Naive thymus-derived CD8-positive, alpha-beta T cell (primary cell): ENCODE measurements at regions of chr7 and their contacts with region 1.

Region 1: DNA sequence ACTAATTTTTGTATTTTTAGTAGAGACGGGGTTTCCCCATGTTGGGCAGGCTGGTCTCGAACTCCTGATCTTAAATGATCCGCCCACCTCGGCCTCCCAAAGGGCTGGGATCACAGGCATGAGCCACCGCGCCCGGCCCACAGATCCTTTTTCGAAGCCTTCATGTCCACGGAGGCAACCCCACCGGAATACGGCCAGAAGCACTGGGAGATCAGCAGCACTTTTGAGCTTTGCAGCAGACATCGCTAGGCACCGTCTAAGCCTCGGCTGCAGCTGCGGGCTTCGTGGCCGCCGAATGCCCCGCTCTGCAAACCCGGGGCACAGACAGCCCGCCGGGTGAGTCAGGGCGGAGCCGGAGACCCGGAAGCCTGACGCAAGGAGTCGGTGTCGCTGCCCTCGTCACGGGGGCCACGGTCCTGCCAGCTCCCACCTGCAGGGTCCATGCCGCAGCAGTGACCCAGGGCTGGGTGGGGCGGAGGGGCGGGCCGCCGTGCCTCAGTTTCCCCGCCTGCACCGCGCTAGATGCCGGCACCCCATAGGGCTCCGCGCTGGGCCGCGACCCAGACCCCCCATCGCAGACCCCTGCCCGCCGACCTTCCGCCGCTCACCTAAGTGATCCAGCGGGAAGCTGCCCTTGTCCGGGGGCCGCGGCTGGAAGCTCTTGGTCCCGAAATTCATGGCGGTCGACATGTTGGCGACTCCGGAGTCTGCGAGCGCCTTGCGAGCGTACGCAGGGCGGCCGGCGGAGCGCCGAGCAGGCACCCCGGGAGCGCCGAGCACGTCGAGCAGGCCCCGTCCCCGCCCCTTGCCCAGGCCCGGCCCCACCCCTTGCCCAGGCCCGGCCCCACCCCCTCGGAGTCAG is at the start of gene COX19:
- DNase-seq: peak; percentile 83 to 95 (median 90)
- ATAC-seq: peak; percentile 89 to 91
- H3K4me3 Mint-ChIP-seq: peak within 1 kb of the TSS; percentile 83 to 95 (median 90)
- H3K27ac Mint-ChIP-seq: peak within 1 kb of the TSS; percentile 74 to 94 (median 91)
- H3K4me1 Mint-ChIP-seq: peaks cover 10 to 39% (median 27%) of the 10 kb centered on the region in 4 donors
- H3K27me3 Mint-ChIP-seq: no peaks in the 10 kb centered on the region
- polyA plus RNA-seq, gene COX19: 19.3 to 21.5 (median 20.2) TPM

Region 2: DNA sequence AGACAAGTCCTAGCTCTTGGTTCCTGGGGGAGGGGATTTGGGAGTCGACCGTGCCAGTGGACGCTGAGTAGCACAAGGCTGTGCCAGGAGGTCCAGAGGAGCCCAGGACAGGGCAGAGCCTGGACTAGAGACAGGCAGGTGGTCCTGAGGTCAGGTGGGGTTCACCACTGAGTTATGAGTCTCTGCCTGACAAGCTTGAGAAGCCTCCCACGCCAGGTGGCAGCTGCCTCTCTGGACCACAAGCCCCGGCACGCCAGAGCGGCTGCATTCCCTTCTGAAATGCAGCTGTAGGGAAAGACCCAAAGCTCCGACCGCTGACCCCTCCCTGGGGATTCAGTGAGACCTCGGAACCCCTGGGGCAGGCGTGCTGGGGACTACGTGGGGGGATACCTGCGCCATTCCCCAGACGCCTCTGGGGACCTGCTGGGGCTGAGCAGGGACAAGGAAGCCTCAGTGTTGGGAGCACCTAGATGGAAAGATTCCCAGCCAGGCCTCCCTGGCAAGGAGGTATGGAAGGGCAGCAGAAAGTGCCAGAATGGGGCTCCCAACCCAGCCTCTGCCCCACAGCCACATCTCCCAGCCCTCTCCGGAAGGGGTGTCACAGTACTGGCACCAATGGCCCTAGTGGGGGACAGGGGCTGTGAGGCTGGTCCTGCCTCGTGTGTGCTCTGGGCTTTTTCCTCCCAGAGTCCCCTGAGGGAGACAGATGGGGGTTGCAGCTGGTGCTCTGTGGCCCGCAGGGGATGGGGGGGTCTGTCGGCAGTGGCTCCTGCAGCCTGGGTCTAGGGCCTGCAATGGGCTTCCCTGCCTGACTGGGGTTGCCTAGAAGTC is 484.4 kb before region 1 on chr7:
- POLR2A ChIA-PET with region 1: no interaction called
- DNase-seq: peak in 1 of 10 donors; percentile 55
- ATAC-seq: no peak
- H3K4me3 Mint-ChIP-seq: no peak overlapping the region
- H3K27ac Mint-ChIP-seq: peak overlapping the region in 1 of 10 donors; percentile 24
- H3K4me1 Mint-ChIP-seq: no peaks in the 10 kb centered on the region
- H3K27me3 Mint-ChIP-seq: peaks cover 0 to 10% (median 0%) of the 10 kb centered on the region in 5 donors

Region 3: GRCh38 chr7:923108-924041 is 51.7 kb before region 1 on chr7:
- POLR2A ChIA-PET with region 1: interaction called, 41 read pairs
- DNase-seq: peak; percentile 68 to 95 (median 89)
- ATAC-seq: peak; percentile 86 to 92
- H3K4me3 Mint-ChIP-seq: peak overlapping the region; percentile 82 to 93 (median 87)
- H3K27ac Mint-ChIP-seq: peak overlapping the region; percentile 92 to 97 (median 94)
- H3K4me1 Mint-ChIP-seq: peaks cover 11 to 57% (median 43%) of the 10 kb centered on the region in 4 donors
- H3K27me3 Mint-ChIP-seq: no peaks in the 10 kb centered on the region

Region 4: DNA sequence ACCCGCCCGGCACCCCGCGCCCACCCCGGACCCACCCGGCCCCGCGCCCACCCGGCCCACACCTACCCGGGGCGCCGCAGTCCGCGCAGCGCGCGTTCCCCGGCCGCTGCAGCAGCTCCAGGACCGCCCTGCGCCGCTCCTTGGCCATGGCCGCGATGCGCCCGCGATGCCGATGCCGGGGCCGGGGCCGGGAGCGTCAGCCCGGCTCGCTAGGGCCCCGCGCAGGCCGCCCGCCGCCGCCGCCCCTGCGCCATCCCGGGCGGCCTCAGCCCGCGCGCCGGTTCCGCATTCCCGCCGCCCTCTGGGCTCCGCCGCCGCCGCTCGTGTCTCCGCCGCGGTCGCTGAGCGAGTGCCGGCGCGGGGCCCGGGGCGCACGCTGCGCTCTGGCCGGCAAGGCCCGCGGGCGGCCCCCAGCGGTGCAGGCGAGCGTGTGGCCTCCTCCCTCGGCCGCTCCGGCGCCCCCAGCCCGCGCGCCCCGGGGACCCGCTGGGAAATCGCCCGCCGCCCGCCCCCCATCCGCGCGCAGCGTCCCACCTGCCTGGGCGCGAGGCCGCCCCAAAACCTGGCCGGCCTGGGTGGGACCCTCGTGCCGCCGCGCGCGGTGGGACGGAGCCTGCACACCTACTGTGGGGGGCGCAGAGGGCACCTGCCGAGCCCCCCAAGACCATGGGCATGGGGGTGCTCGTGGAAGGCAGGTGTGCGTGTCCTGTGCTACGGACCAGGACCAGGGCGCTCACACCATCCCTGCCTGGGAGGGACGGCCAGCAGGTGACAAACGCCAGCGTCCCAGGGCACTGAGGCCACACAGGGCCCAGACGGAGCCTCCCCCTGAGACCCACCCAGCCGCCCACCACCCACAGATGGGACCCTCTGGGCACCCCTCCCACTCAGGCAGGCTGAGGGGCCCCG is 20.5 kb before region 1 on chr7 and contains the start of gene ADAP1:
- POLR2A ChIA-PET with region 1: interaction called, 11 read pairs
- DNase-seq: peak; percentile 25 to 72 (median 50)
- ATAC-seq: peak; percentile 83 to 91
- H3K4me3 Mint-ChIP-seq: peak within 1 kb of the TSS; percentile 67 to 80 (median 75)
- H3K27ac Mint-ChIP-seq: peak within 1 kb of the TSS in 3 of 10 donors; percentile 57 to 74 (median 57)
- H3K4me1 Mint-ChIP-seq: peaks cover 0 to 14% (median 5%) of the 10 kb centered on the region in 4 donors
- H3K27me3 Mint-ChIP-seq: peaks cover 0 to 2% (median 0%) of the 10 kb centered on the region in 5 donors
- polyA plus RNA-seq, gene ADAP1: 7.6 to 18.4 (median 8.2) TPM

Region 5: GRCh38 chr7:992709-993607 is 17.9 kb after region 1 on chr7:
- POLR2A ChIA-PET with region 1: interaction called, 21 read pairs
- DNase-seq: peak; percentile 84 to 96 (median 90)
- ATAC-seq: peak; percentile 99
- H3K4me3 Mint-ChIP-seq: no peak overlapping the region
- H3K27ac Mint-ChIP-seq: no peak overlapping the region
- H3K4me1 Mint-ChIP-seq: peaks cover 3 to 8% (median 7%) of the 10 kb centered on the region in 4 donors
- H3K27me3 Mint-ChIP-seq: no peaks in the 10 kb centered on the region

Region 6: DNA sequence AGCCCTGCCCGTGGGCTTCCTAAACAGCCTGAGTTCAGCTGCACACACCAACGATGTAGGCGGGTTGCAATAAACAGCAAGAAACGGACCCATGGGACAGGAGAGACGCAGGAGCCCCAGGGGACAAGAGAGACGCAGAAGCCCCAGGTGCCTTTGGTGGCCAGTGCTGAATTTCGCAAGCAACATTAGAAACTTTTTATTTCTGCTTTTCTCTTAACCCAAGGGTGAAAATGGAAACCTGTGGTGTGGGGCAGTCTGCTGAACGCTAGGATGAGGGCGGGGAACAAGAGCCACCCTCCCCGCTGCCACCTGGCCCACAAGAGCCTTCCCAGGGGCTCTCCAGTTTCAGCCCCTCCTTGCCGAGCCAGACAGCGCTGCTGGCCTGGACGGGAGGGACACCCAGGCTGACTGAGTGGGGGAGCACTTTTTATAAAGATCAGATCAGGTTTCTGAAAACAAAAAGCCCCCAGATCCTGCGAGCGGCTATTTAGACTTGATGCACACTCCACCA is 49.3 kb after region 1 on chr7:
- POLR2A ChIA-PET with region 1: no interaction called
- DNase-seq: peak in 2 of 10 donors; percentile 26 to 71
- ATAC-seq: peak in 1 of 2 donors; percentile 4
- H3K4me3 Mint-ChIP-seq: peak overlapping the region in 2 of 10 donors; percentile 38 to 61
- H3K27ac Mint-ChIP-seq: peak overlapping the region in 6 of 10 donors; percentile 41 to 76 (median 55)
- H3K4me1 Mint-ChIP-seq: peaks cover 10 to 48% (median 32%) of the 10 kb centered on the region in 4 donors
- H3K27me3 Mint-ChIP-seq: no peaks in the 10 kb centered on the region

Region 7: GRCh38 chr7:1065263-1066260 is 90.5 kb after region 1 on chr7:
- POLR2A ChIA-PET with region 1: interaction called, 10 read pairs
- DNase-seq: peak; percentile 65 to 90 (median 80)
- ATAC-seq: peak; percentile 97 to 98
- H3K4me3 Mint-ChIP-seq: peak overlapping the region; percentile 53 to 81 (median 69)
- H3K27ac Mint-ChIP-seq: peak overlapping the region in 1 of 10 donors; percentile 15
- H3K4me1 Mint-ChIP-seq: peaks cover 5 to 21% (median 17%) of the 10 kb centered on the region in 4 donors
- H3K27me3 Mint-ChIP-seq: peaks cover 0 to 19% (median 0%) of the 10 kb centered on the region in 5 donors

Region 8: GRCh38 chr7:1403638-1404459 is 428.8 kb after region 1 on chr7:
- POLR2A ChIA-PET with region 1: no interaction called
- DNase-seq: no peak
- ATAC-seq: no peak
- H3K4me3 Mint-ChIP-seq: peak overlapping the region in 5 of 10 donors; percentile 1 to 59 (median 17)
- H3K27ac Mint-ChIP-seq: peak overlapping the region in 1 of 10 donors; percentile 29
- H3K4me1 Mint-ChIP-seq: peaks cover 4 to 9% (median 6%) of the 10 kb centered on the region in 4 donors
- H3K27me3 Mint-ChIP-seq: peaks cover 25 to 82% (median 47%) of the 10 kb centered on the region in 5 donors